Activated naive CD4-positive, alpha-beta T cell treated with anti-CD3 and anti-CD28 coated beads, Interleukin-2, amount 10 ng/mL, durations not matched to agents 7 days and 5 days (primary cell): ENCODE measurements at regions of chr1 and their contacts with region 1.

Region 1: DNA sequence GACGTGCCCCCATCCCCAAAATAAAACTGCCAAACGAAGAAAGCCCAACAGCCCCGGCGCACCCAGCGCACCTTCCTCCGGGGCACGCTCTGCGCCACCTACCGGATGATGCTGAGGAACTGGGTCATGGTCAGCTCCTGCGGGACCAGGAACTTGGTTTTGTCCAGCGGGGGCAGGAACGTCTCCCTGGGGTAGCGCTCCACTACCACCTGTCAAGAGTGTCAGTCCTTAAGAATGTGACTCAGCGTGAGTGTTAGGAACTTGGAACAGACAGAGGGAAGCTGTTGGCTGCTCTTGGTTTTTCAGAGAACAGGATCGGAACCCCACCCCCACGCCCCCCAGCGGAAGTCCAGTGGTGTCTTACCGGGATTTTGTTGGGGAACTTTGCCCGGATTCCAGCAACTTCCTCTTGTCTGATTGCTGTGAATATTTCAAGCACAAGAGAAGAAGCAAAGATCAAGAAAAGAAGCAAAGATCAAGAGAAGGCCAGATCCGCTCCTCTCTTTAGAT is 431 bp downstream of the MAP1LC3C start:
- DNase-seq: peak; percentile 67
- H3K4me3 Mint-ChIP-seq: peak overlapping the region; percentile 21
- H3K27ac Mint-ChIP-seq: no peak overlapping the region
- H3K4me1 Mint-ChIP-seq: peaks cover 8% of the 10 kb centered on the region
- H3K27me3 Mint-ChIP-seq: peaks cover 11% of the 10 kb centered on the region

Region 2: GRCh38 chr1:241592273-241592958 is 406.1 kb before region 1 on chr1:
- CTCF ChIA-PET with region 1: no interaction called
- DNase-seq: no peak
- H3K4me3 Mint-ChIP-seq: no peak overlapping the region
- H3K27ac Mint-ChIP-seq: no peak overlapping the region
- H3K4me1 Mint-ChIP-seq: no peaks in the 10 kb centered on the region
- H3K27me3 Mint-ChIP-seq: no peaks in the 10 kb centered on the region

Region 3: GRCh38 chr1:241611063-241611462 is 387.4 kb before region 1 on chr1:
- CTCF ChIA-PET with region 1: interaction called, 22 read pairs
- DNase-seq: peak; percentile 25
- H3K4me3 Mint-ChIP-seq: no peak overlapping the region
- H3K27ac Mint-ChIP-seq: no peak overlapping the region
- H3K4me1 Mint-ChIP-seq: no peaks in the 10 kb centered on the region
- H3K27me3 Mint-ChIP-seq: no peaks in the 10 kb centered on the region

Region 4: DNA sequence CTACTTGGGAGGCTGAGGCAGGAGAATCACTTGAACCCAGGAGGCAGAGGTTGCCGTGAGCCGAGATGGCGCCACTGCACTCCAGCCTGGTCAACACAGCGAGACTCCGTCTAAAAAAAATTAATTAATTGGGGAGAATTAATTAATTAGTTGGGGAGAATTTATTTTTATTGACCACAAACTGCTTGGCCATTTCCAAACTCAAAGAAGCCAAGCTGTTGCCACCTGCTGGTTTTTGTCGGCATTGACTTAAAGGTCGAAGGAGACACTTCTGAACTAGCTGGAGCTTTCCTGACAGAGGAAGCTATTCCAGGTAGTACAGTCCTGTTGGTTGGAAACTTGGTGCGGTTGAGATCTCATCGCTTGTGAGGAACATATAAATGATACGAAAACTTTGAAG is 12.7 kb before region 1 on chr1:
- CTCF ChIA-PET with region 1: interaction called, 16 read pairs
- DNase-seq: peak; percentile 33
- H3K4me3 Mint-ChIP-seq: no peak overlapping the region
- H3K27ac Mint-ChIP-seq: no peak overlapping the region
- H3K4me1 Mint-ChIP-seq: no peaks in the 10 kb centered on the region
- H3K27me3 Mint-ChIP-seq: no peaks in the 10 kb centered on the region